Activated T-helper 2 cell treated with anti-CD3 and anti-CD28 coated beads, Interferon-gamma antibody, Interleukin-2, Interleukin-4, amounts not matched to agents 10 μg/mL and 5 μg/mL and 100 μg/mL, durations not matched to agents 14 hours and 24 hours and 36 hours (primary cell): ENCODE measurements at regions of chr16 and their contacts with region 1.

Region 1: DNA sequence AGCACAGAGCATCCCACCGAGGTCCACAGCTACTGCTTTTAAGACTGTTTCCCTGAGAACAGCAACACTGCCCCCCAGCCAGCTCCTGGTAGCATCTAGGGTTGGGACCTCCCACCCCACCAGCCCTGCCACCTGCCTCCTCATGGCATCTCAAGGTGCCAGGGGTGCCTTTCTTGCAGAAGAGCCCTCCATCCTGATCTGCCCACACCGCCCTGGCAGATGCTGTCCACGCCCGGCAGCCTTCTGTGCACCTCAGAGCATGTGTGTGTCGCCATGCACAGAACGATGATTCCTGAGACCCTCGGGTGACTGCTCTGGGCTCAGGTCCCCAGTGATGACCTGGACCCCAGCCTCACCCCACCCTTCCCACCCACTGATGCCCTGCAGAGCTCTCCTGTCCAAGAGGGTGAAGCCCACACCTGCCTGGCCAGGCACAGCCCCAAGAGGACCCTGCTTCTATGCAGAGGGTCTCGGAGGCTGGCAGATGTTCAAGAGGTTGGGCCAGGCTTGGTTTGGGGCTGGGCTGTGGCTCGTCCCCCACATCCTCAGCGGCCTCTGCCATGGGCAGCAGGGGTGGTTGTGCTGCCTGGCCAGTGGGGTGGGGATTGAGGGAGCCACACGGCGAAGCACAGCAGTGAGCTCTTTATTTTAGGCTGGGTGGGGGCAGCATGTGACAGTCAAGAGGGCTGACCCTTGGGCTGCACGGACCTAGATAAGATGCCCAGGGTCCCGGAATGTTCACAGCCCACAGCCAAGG is 5.2 kb upstream of the SPATA2L start:
- DNase-seq: no peak
- H3K4me3 Mint-ChIP-seq: no peak overlapping the region
- H3K27ac Mint-ChIP-seq: no peak overlapping the region
- H3K4me1 Mint-ChIP-seq: peaks cover 9% of the 10 kb centered on the region
- H3K27me3 Mint-ChIP-seq: no peaks in the 10 kb centered on the region

Region 2: GRCh38 chr16:89793955-89794354 is 87.3 kb after region 1 on chr16:
- intact Hi-C with region 1: loop called (anchors 2 kb)
- DNase-seq: no peak
- H3K4me3 Mint-ChIP-seq: no peak overlapping the region
- H3K27ac Mint-ChIP-seq: no peak overlapping the region
- H3K4me1 Mint-ChIP-seq: no peaks in the 10 kb centered on the region
- H3K27me3 Mint-ChIP-seq: no peaks in the 10 kb centered on the region